ENCODE measurements at regions of chr4 and their contacts with region 1.

Region 1: GRCh38 chr4:10403633-10404445 is 53.4 kb downstream of the ZNF518B start:
- DNase-seq: no peak
- ATAC-seq: peak; percentile 33 to 56
- H3K4me3 ChIP-seq: no peak overlapping the region
- H3K27ac ChIP-seq: no peak overlapping the region
- H3K4me1 ChIP-seq: no peaks in the 10 kb centered on the region
- H3K27me3 ChIP-seq: no peaks in the 10 kb centered on the region
- CTCF ChIP-seq: peak; percentile 36 to 53 (median 48)
- POLR2A ChIP-seq: no peak

Region 2: DNA sequence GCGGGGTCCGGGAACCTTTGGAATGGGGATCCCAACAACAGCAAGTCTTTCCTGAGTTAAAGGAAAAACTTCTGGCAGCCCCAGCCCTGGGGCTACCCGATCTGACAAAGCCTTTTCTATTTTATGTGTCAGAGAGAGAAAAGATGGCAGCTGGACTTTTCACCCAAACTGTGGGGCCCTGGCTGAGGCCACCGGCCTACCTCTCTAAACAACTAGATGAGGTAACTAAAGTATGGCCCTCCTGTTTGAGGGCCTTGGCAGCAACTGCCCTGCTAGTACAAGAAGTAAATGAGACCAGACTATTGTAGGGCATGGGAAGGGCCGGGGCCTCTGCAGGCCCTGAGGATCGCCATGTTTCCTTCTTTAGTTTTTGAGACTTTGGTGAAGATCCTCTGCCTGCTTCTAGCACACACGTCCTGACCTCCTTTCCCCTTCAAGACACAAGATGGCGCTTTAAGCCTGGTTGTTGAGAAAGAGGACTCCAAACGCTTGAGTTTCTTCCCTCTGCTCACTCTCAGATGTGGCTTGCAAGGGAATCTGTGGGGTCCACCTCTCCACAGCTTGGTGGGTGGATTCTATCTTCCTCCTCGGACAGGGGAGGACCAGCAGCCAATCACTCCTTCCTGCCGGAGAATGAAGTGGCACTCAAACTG is 640.9 kb before region 1 on chr4:
- in situ Hi-C with region 1: loop called in 1 of 4 experiments (anchors 25 kb)
- intact Hi-C with region 1: loop called (anchors 5 kb)
- DNase-seq: peak; percentile 10 to 21
- ATAC-seq: no peak
- H3K4me3 ChIP-seq: no peak overlapping the region
- H3K27ac ChIP-seq: no peak overlapping the region
- H3K4me1 ChIP-seq: no peaks in the 10 kb centered on the region
- H3K27me3 ChIP-seq: peaks cover 0 to 6% (median 0%) of the 10 kb centered on the region in 3 donors
- CTCF ChIP-seq: peak; percentile 26 to 61 (median 58)
- POLR2A ChIP-seq: no peak

Region 3: GRCh38 chr4:10033191-10033881 is 370.5 kb before region 1 on chr4:
- in situ Hi-C with region 1: no loop called
- intact Hi-C with region 1: no loop called
- DNase-seq: no peak
- ATAC-seq: no peak
- H3K4me3 ChIP-seq: no peak overlapping the region
- H3K27ac ChIP-seq: peak overlapping the region; percentile 21 to 54 (median 48)
- H3K4me1 ChIP-seq: peaks cover 50 to 61% of the 10 kb centered on the region in 2 donors
- H3K27me3 ChIP-seq: no peaks in the 10 kb centered on the region
- CTCF ChIP-seq: no peak
- POLR2A ChIP-seq: no peak

Region 4: GRCh38 chr4:10157478-10158332 is 246.1 kb before region 1 on chr4:
- in situ Hi-C with region 1: loop called (anchors 5 to 25 kb)
- intact Hi-C with region 1: loop called (anchors 1 kb)
- DNase-seq: peak in 1 of 2 donors; percentile 29
- ATAC-seq: peak; percentile 66 to 76
- H3K4me3 ChIP-seq: no peak overlapping the region
- H3K27ac ChIP-seq: no peak overlapping the region
- H3K4me1 ChIP-seq: no peaks in the 10 kb centered on the region
- H3K27me3 ChIP-seq: no peaks in the 10 kb centered on the region
- CTCF ChIP-seq: peak; percentile 64 to 80 (median 73)
- POLR2A ChIP-seq: no peak

Region 5: DNA sequence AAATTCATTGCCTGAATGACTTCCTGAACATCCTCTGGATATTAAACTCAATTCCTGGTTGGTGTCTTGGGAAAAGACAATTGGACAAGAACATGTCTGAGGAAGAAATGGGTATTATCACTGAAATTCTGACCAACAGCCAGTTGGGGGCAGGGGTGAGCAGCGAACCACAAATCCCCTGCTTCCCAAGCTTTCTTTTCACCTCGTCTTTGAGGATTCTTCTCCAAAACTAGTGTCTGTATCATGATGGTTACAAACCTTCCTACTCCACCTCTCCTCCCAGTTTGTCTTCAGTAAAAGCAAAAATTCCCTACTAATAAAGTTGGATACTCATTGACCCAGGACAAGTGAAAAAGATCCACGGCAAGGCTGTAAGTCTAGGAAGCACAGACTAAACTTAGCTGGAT is 239.0 kb before region 1 on chr4:
- in situ Hi-C with region 1: loop called in 3 of 4 experiments (anchors 5 to 25 kb)
- intact Hi-C with region 1: loop called (anchors 1 kb)
- DNase-seq: no peak
- ATAC-seq: no peak
- H3K4me3 ChIP-seq: no peak overlapping the region
- H3K27ac ChIP-seq: no peak overlapping the region
- H3K4me1 ChIP-seq: peaks cover 0 to 5% of the 10 kb centered on the region in 2 donors
- H3K27me3 ChIP-seq: no peaks in the 10 kb centered on the region
- CTCF ChIP-seq: peak in 4 of 5 experiments; percentile 31 to 50 (median 44)
- POLR2A ChIP-seq: no peak

Region 6: GRCh38 chr4:10787365-10787764 is 383.5 kb after region 1 on chr4:
- in situ Hi-C with region 1: no loop called
- intact Hi-C with region 1: no loop called
- DNase-seq: no peak
- ATAC-seq: no peak
- H3K4me3 ChIP-seq: no peak overlapping the region
- H3K27ac ChIP-seq: no peak overlapping the region
- H3K4me1 ChIP-seq: no peaks in the 10 kb centered on the region
- H3K27me3 ChIP-seq: no peaks in the 10 kb centered on the region
- CTCF ChIP-seq: no peak
- POLR2A ChIP-seq: no peak

Measured in gastrocnemius medialis (tissue), 4 donors.